ENCODE measurements at regions of chr3 and their contacts with region 1.

Region 1: DNA sequence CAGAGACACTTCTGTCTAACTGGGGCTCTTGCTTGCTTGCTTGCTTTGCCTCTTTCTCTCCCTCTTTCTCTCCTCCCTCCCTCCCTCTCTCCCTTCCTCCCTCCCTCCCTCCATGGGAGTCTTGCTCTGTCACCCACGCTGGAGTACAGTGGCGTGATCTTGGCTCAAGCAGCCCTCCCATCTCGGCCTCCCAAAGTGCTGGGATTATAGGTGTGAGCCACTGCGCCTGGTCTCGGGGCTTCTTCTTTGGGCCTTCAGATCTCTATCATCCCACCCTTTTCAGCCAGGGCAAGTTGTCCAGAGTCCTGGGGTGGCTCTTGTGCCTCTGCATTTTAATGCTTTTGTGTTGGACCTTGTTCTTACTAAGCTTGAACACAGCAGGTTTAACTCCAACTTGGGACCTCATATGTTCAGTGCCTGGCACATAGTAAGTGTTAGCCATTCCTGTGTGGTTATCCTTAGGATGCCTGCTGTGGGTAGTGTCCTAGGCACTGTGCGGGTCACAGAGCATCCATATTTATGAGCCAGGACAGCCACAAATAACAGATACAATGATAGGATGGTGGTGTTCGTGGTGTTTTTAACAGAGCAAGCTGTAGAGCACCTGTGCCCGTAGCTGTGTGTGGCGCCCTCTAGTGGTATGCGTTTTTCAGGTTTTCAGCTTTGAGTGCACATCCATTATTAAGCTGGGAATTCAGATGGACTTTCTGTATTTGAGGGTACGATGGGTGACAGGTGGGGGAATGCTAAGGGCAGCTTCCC is 75.1 kb downstream of the CCK start:
- DNase-seq: peak; percentile 49
- ATAC-seq: peak; percentile 42 to 62

Region 2: GRCh38 chr3:42118762-42119361 is 72.0 kb before region 1 on chr3:
- intact Hi-C with region 1: loop called (anchors 5 kb)
- DNase-seq: no peak
- ATAC-seq: peak in 1 of 2 donors; percentile 30